Activated B cell treated with CpG ODN at 0.5 μM for 24 hours (primary cell): ENCODE measurements at regions of chr1 and their contacts with region 1.

Region 1: DNA sequence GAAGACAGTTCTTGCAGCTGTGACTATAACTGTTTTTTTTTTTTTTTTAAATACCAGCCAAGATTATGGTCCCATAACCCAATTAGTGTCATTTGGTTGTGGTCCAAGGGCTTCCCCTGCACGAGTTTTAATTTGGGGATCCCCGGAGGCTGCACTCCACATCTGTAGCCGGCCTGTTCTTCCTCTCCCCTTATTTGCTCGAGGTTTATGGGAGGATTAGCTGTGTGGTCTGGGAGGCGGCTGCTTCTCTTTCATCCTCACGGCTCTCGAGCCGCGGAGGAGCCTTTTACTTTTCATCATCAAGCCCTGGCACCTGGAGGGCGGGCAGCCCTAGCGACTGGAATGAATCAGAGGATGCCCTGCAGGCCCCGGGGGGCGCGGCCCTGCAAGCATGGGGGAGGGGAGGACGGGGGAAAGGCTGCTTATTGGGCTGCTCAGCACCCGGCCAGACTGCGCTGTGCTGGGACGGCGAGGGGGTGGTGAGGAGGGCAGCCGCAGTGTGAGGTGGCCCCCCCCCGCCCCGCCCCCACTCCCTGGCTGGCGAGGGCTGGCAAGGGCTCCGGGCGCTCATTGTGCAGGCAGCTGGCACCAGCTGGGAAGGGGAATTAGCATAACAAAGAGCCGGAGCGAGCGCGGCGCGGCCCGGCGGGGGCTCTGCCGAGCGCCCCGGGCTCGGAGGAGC is 18.5 kb downstream of the SERTAD4 start:
- DNase-seq: peak; percentile 31
- ATAC-seq: peak; percentile 78
- H3K4me3 Mint-ChIP-seq: peak overlapping the region; percentile 77
- H3K27ac Mint-ChIP-seq: no peak overlapping the region
- H3K4me1 Mint-ChIP-seq: peaks cover 28% of the 10 kb centered on the region
- H3K27me3 Mint-ChIP-seq: peaks cover 42% of the 10 kb centered on the region
- CTCF ChIP-seq: no peak

Region 2: DNA sequence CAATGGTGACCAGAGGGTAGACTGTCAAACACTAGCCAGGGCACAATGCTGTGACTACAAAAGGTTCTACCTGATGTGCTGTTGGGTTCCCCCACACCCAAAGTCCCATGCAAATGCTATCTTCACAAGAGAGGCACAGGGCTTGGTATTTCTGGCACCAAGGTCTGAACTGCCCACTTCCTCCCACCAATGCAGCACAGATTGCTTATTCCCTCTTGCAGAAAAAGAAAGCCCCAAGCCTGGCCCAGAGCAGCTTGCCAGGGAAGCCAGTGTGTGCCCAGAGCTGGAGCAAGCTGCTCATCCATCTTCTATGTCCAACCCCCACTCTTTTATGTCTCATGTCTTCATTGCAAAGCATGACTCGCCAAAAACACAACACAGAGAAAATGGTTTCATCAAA is 817.1 kb before region 1 on chr1:
- CTCF ChIA-PET with region 1: no interaction called
- POLR2A ChIA-PET with region 1: no interaction called
- intact Hi-C with region 1: no loop called
- DNase-seq: no peak
- ATAC-seq: no peak
- H3K4me3 Mint-ChIP-seq: no peak overlapping the region
- H3K27ac Mint-ChIP-seq: no peak overlapping the region
- H3K4me1 Mint-ChIP-seq: no peaks in the 10 kb centered on the region
- H3K27me3 Mint-ChIP-seq: peaks cover 15% of the 10 kb centered on the region
- CTCF ChIP-seq: no peak

Region 3: GRCh38 chr1:210200124-210200736 is 50.9 kb before region 1 on chr1:
- CTCF ChIA-PET with region 1: no interaction called
- POLR2A ChIA-PET with region 1: no interaction called
- intact Hi-C with region 1: no loop called
- DNase-seq: no peak
- ATAC-seq: no peak
- H3K4me3 Mint-ChIP-seq: no peak overlapping the region
- H3K27ac Mint-ChIP-seq: no peak overlapping the region
- H3K4me1 Mint-ChIP-seq: no peaks in the 10 kb centered on the region
- H3K27me3 Mint-ChIP-seq: peaks cover 3% of the 10 kb centered on the region
- CTCF ChIP-seq: no peak

Region 4: GRCh38 chr1:210231846-210232510 is 19.2 kb before region 1 on chr1:
- CTCF ChIA-PET with region 1: no interaction called
- POLR2A ChIA-PET with region 1: no interaction called
- intact Hi-C with region 1: loop called (anchors 1 kb)
- DNase-seq: no peak
- ATAC-seq: no peak
- H3K4me3 Mint-ChIP-seq: peak overlapping the region; percentile 33
- H3K27ac Mint-ChIP-seq: no peak overlapping the region
- H3K4me1 Mint-ChIP-seq: peaks cover 14% of the 10 kb centered on the region
- H3K27me3 Mint-ChIP-seq: peaks cover 38% of the 10 kb centered on the region
- CTCF ChIP-seq: no peak